ENCODE measurements at regions of chr1 and their contacts with region 1.

Region 1: DNA sequence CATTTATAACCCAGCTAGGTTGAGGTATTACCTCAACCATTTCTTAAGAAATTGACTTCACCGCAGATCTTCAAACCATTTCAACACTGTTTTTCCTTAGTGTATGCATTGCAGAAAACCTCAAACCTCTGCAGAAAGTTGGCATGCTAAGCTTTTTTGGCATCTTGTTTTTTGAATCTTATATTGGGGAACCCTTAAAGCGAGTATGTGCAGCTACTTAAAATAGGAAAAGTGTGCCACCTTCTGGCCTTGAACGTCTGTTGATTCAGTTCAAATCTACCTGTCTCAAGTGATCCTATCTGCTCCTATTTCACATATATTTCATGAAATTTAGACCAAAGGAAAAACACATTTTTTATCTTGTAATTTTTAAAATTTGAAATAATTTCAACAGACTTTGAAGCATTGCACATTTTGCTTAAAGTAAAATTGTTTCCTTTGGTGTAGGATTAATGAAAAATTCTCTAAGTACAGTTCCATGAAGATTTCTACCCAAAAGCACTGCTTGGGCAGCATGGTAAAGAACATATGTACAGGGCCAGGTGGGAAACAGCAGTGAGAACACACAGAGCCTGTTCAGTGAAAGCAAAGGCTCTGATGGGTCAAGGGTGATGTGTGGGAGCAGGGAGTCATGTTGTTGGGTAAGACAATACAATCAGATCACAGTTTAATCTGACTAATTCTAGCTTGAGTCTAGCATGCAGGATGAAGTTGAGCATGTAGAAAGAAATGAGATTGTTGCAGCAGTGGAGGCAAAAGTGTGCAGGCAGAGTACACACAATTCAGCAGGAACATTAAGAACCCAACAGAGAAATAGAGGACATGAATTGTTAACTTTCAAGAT is 17.2 kb downstream of the HENMT1 start:
- DNase-seq: no peak
- ATAC-seq: peak in 1 of 2 donors; percentile 66
- H3K4me3 ChIP-seq: no peak overlapping the region
- H3K27ac ChIP-seq: no peak overlapping the region
- H3K4me1 ChIP-seq: no peaks in the 10 kb centered on the region
- H3K27me3 ChIP-seq: no peaks in the 10 kb centered on the region
- CTCF ChIP-seq: peak; percentile 40 to 59 (median 47)
- POLR2A ChIP-seq: no peak

Region 2: DNA sequence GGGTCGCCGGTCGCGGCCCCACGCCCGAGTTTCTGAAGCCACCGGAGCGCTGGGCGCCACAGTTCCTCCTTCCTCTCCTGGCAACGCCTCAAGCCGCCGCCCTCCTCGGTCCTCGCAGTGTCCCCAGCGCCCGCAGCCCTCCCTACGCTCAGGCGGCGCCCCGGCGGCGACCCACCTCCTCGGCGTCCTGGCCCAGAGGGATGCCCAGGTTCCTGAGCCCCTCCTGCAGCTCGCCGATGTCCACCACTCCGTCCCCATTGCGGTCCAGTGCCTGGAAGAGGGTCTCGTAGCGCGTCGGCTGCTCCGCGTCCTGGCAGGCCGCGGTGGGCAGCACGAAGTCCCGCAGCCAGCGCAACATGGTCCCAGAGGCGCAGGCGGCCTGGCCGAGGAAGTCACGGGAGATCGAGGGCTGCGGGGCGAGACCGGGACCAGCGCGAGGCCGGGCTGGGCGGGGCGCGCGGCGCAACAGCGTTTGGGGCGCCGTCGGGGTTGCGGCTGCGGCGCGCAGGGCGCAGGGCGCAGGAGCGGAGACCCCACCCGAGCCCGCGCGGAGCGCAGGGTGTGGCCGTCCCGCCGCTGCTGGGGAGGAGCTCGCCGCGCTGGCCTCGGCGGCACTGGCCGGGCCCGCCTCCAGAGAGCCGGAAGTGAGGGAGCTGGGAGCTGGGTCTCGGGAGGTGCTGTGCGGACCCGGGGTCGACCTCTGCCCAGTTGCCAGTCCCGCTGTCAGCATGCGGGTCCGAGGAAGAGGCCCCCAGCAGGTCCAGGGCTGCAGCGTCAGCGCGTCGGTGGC is 443.7 kb before region 1 on chr1 and contains the start of gene SLC25A24:
- in situ Hi-C with region 1: loop called in 1 of 4 experiments (anchors 25 kb)
- intact Hi-C with region 1: no loop called
- DNase-seq: peak; percentile 61 to 70
- ATAC-seq: peak; percentile 84
- H3K4me3 ChIP-seq: peak within 1 kb of the TSS; percentile 84 to 97 (median 88)
- H3K27ac ChIP-seq: peak within 1 kb of the TSS; percentile 89 to 97 (median 92)
- H3K4me1 ChIP-seq: peaks cover 19 to 20% of the 10 kb centered on the region in 2 donors
- H3K27me3 ChIP-seq: no peaks in the 10 kb centered on the region
- CTCF ChIP-seq: no peak
- POLR2A ChIP-seq: peak; percentile 63 to 67
- total RNA-seq, gene SLC25A24: 6.8 to 12.3 (median 9.3) TPM

Region 3: GRCh38 chr1:108503076-108503740 is 140.5 kb before region 1 on chr1:
- in situ Hi-C with region 1: loop called in 2 of 4 experiments (anchors 5 to 10 kb)
- intact Hi-C with region 1: no loop called
- DNase-seq: no peak
- ATAC-seq: no peak
- H3K4me3 ChIP-seq: no peak overlapping the region
- H3K27ac ChIP-seq: no peak overlapping the region
- H3K4me1 ChIP-seq: no peaks in the 10 kb centered on the region
- H3K27me3 ChIP-seq: no peaks in the 10 kb centered on the region
- CTCF ChIP-seq: no peak
- POLR2A ChIP-seq: no peak

Region 4: GRCh38 chr1:108512239-108512981 is 131.3 kb before region 1 on chr1:
- in situ Hi-C with region 1: loop called (anchors 5 to 10 kb)
- intact Hi-C with region 1: loop called (anchors 1 kb)
- DNase-seq: no peak
- ATAC-seq: no peak
- H3K4me3 ChIP-seq: no peak overlapping the region
- H3K27ac ChIP-seq: no peak overlapping the region
- H3K4me1 ChIP-seq: no peaks in the 10 kb centered on the region
- H3K27me3 ChIP-seq: no peaks in the 10 kb centered on the region
- CTCF ChIP-seq: peak; percentile 30 to 69 (median 62)
- POLR2A ChIP-seq: no peak

Region 5: DNA sequence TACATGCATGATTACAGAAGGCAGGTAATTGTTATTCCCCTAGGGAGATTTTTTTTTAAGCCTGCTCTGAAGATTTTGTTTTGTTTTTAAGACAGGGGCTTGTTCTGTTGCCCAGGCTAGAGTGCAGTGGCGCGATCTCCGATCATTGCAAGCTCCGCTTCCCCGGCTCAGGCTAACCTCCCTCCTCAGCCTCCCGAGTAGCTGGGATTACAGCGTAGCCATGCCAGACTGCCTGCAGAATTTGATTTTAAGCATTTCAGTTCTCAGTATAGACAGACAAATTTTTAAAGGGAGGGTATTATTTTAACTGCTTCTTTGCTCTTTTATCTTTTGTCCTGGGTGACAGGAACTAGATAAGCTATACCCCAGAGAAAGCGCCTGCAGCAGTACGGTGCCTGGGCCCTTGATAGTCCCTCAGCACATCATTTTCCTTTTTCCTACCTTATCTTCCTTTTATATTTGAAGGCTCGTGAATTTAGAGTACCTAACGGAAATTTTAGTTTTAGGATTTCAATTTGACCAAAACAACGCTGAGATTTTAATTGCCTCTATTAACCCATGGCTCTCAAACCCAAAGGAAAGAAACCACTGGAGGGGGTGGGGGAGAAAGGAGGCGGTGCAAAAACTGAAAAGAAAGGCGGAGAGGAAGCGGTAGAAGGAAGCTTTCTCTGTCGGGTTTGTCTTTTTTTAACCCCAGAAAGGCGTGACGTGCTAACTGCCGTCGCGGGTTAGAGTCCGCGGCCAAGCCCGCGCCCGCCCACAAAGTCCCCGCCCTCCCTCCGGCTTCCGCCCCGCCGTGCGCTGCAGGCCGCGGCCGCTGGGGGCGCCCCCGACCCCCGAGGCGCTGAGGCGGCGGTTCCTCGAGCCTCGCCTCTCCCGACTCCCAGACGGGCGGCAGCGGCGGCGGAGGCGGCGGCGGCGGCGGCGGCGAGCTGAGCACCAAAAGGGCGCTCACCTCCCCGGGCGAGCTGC is 84.2 kb before region 1 on chr1 and contains the start of gene EEIG2:
- in situ Hi-C with region 1: no loop called
- intact Hi-C with region 1: loop called (anchors 5 kb)
- DNase-seq: peak; percentile 50 to 69
- ATAC-seq: peak; percentile 89 to 94
- H3K4me3 ChIP-seq: peak within 1 kb of the TSS; percentile 58 to 75 (median 62)
- H3K27ac ChIP-seq: peak within 1 kb of the TSS; percentile 44 to 65 (median 54)
- H3K4me1 ChIP-seq: peaks cover 13 to 14% of the 10 kb centered on the region in 2 donors
- H3K27me3 ChIP-seq: no peaks in the 10 kb centered on the region
- CTCF ChIP-seq: peak; percentile 55 to 90 (median 81)
- POLR2A ChIP-seq: peak in 1 of 2 donors; percentile 28
- total RNA-seq, gene EEIG2: 0.41 to 3.6 (median 1.5) TPM

Region 6: GRCh38 chr1:108791790-108792189 is 148.1 kb after region 1 on chr1:
- in situ Hi-C with region 1: no loop called
- intact Hi-C with region 1: no loop called
- DNase-seq: no peak
- ATAC-seq: no peak
- H3K4me3 ChIP-seq: no peak overlapping the region
- H3K27ac ChIP-seq: no peak overlapping the region
- H3K4me1 ChIP-seq: no peaks in the 10 kb centered on the region
- H3K27me3 ChIP-seq: no peaks in the 10 kb centered on the region
- CTCF ChIP-seq: no peak
- POLR2A ChIP-seq: no peak